Right lobe of liver (tissue), 6 donors: ENCODE measurements at regions of chr1 and their contacts with region 1.

Region 1: DNA sequence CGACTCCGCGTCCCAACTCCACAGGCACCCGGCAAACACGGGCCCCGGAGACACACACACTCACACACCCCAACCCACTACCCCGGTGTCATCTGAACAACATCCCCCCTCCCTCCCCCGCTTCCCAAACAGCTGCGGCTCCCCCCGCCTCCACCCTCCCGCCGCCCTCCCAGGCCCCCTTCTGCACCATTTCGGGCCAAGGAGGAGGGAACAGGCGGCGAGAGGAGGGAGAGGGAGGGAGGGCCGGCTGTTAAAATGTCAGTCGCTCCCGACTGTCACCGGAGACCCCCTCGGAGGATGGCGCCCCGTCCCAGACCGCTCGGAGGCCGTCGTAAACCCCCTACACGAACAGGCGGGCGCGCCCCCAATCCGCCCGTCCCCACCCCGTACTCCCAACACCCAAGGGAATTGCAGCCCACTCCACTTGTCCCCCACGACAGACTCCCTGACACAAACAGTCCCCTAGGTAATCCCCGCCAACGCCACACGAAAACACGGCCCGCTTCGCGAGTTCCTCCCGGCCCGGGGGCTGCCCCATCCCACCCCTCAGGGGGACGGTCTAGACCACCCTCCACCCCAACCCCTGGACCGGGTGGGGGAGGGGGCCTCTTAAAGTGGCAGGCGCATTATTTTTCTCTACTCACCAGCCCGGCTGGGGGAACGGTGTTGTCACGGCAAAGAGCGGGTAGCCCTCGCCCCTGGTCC is 581 bp downstream of the MEF2D start:
- DNase-seq: peak in 1 of 3 donors; percentile 57
- ATAC-seq: no peak
- H3K4me3 ChIP-seq: peak overlapping the region; percentile 86 to 100 (median 91)
- H3K27ac ChIP-seq: peak overlapping the region; percentile 98 to 100 (median 99)
- H3K4me1 ChIP-seq: peaks cover 2 to 65% (median 32%) of the 10 kb centered on the region in 4 donors
- H3K27me3 ChIP-seq: no peaks in the 10 kb centered on the region
- CTCF ChIP-seq: no peak
- POLR2A ChIP-seq: no peak

Region 2: DNA sequence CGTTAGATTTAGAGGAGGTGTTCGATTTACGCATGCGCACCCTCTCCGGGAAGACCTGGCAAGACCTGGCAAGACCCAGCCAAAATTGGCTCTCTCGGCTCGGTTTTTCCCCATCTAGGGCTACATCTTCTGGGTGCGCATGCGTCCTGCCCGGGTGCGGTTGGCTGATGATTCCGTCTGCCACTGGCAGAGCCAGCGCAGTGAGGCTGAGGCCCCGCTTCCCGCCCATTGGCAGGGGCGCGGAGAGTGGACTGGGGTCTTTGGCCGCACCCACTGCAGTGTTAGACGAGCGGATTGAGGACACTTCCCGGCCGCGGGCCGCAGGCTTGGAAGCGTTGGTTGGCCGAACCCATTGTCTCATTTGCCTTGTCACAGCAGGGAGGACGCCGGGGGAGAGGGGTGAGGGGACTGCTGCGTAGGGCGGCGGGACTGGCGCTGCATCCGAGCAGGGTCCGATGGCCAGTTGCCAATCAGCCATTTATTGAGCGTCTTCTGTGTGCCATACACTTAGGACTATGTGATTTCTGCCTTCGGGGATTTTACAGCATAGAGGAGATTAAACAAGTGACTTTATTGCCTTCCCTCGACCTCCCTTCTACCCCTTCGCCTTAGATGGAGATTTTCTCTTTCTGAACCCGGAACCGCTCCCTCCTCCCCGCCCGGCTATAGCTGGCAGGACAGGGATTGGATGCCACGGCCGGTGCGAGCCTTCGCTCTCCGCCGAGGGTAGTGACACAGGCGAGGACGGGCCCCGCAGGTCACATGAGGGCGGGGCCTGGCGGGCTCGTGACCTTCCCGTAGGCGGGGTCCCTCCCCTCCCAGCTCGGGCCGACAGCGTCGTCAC is 43.1 kb before region 1 on chr1:
- intact Hi-C with region 1: loop called (anchors 5 kb)
- DNase-seq: peak; percentile 97 to 99 (median 99)
- ATAC-seq: peak; percentile 85 to 92 (median 88)
- H3K4me3 ChIP-seq: peak overlapping the region; percentile 36 to 60 (median 55)
- H3K27ac ChIP-seq: peak overlapping the region; percentile 91 to 99 (median 98)
- H3K4me1 ChIP-seq: peaks cover 0 to 30% (median 2%) of the 10 kb centered on the region in 4 donors
- H3K27me3 ChIP-seq: no peaks in the 10 kb centered on the region
- CTCF ChIP-seq: no peak
- POLR2A ChIP-seq: peak; percentile 94

Region 3: DNA sequence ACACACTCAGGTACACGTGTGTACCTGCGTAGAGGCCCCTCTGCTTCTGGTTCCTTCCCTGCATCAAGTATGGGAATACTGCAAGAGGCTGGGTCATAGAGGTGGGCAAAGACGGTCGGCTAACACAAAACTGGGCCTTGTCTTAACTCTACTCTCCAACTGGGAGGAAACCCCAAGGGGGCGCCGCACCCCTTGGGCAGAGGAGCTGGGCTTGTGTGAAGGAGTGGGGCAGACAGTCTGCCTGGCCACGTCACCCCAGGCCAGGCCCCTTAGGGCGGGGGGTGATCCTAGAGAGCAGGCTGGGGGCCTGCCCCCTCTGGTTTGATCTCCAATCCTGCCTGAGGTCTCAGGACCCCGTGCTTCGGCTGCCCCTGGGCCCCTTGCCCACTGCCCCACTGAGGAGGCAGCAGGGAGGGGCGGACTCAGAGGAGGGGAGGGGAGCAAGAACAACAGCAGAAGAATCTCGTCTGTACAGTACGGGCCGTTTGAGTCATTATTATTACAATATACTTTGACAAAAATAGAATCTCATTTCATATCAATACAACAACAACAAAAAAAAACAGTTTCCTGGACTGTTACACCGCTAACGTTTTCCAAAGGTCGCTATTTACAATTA is 34.1 kb before region 1 on chr1:
- intact Hi-C with region 1: loop called in 1 of 2 experiments (anchors 5 kb)
- DNase-seq: no peak
- ATAC-seq: peak in 2 of 4 donors; percentile 6 to 17
- H3K4me3 ChIP-seq: no peak overlapping the region
- H3K27ac ChIP-seq: no peak overlapping the region
- H3K4me1 ChIP-seq: peaks cover 0 to 4% (median under 1%) of the 10 kb centered on the region in 4 donors
- H3K27me3 ChIP-seq: no peaks in the 10 kb centered on the region
- CTCF ChIP-seq: peak in 3 of 4 donors; percentile 6 to 17 (median 10)
- POLR2A ChIP-seq: no peak